ENCODE measurements at regions of chr6 and their contacts with region 1.

Region 1: GRCh38 chr6:43174263-43175112 is 3.4 kb downstream of the SRF start:
- DNase-seq: peak; percentile 100
- H3K4me3 ChIP-seq: peak overlapping the region; percentile 88 to 96 (median 96)
- H3K27ac ChIP-seq: peak overlapping the region; percentile 98 to 100 (median 99)
- H3K4me1 ChIP-seq: peaks cover 35 to 60% (median 53%) of the 10 kb centered on the region in 4 donors
- H3K27me3 ChIP-seq: no peaks in the 10 kb centered on the region
- CTCF ChIP-seq: peak in 2 of 3 experiments; percentile 17 to 28
- EP300 ChIP-seq: no peak
- POLR2A ChIP-seq: peak; percentile 62

Region 2: GRCh38 chr6:43402820-43403219 is 228.3 kb after region 1 on chr6:
- intact Hi-C with region 1: no loop called
- DNase-seq: no peak
- H3K4me3 ChIP-seq: no peak overlapping the region
- H3K27ac ChIP-seq: no peak overlapping the region
- H3K4me1 ChIP-seq: no peaks in the 10 kb centered on the region
- H3K27me3 ChIP-seq: peaks cover 0 to 12% (median 0%) of the 10 kb centered on the region in 4 donors
- CTCF ChIP-seq: no peak
- EP300 ChIP-seq: no peak
- POLR2A ChIP-seq: no peak

Region 3: GRCh38 chr6:43516697-43517504 is 342.4 kb after region 1 on chr6 and contains the starts of genes POLR1C and YIPF3:
- intact Hi-C with region 1: loop called (anchors 10 kb)
- DNase-seq: peak; percentile 99
- H3K4me3 ChIP-seq: peak within 1 kb of the TSS; percentile 77 to 92 (median 86)
- H3K27ac ChIP-seq: peak within 1 kb of the TSS; percentile 85 to 89 (median 88)
- H3K4me1 ChIP-seq: peaks cover 41 to 56% (median 51%) of the 10 kb centered on the region in 4 donors
- H3K27me3 ChIP-seq: no peaks in the 10 kb centered on the region
- CTCF ChIP-seq: peak in 1 of 3 experiments; percentile 11
- EP300 ChIP-seq: no peak
- POLR2A ChIP-seq: no peak
- total RNA-seq, gene POLR1C: 9.1 to 30.3 (median 17.6) TPM
- total RNA-seq, gene YIPF3: 73.6 to 96.9 (median 84.9) TPM